Activated naive CD4-positive, alpha-beta T cell treated with anti-CD3 and anti-CD28 coated beads, Interleukin-2, amount 10 ng/mL, durations not matched to agents 7 days and 5 days (primary cell): ENCODE measurements at regions of chr11 and their contacts with region 1.

Region 1: DNA sequence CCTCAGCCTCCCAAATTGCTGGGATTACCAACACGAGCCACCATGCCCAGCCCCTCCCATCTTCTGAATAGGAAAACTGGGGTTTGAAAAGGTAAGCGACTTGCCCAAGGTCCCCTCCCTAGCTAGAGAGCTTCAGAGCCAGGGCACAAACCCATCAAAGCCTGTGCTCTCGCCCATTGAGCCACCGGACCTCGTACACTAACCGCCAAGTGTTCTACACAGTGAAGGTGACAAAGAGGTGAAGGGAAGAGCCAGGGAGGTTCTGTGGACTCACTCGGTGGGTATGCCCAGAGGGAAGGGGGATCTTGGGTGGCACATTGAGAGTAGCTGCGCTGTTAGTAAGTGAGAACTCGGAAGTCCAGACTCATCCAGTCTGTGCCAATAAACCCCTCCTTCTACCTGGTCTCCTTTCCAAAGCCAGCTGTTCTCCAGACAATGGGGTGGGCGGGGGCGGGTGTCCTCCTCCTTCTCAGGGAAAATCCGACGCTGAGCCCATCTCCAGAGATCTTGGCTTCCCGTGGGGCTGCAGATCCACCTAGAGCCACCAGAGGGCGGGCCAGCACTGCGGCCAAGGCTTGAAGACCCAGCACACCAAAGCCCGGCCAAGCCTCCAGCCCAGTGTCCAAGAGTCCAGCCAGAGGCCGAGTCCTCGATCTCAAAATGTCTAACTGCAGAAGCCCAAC is 3.2 kb upstream of the RTN4RL2 start:
- DNase-seq: peak; percentile 82
- H3K4me3 Mint-ChIP-seq: no peak overlapping the region
- H3K27ac Mint-ChIP-seq: no peak overlapping the region
- H3K4me1 Mint-ChIP-seq: peaks cover 32% of the 10 kb centered on the region
- H3K27me3 Mint-ChIP-seq: peaks cover 78% of the 10 kb centered on the region

Region 2: GRCh38 chr11:57303990-57304579 is 153.0 kb before region 1 on chr11:
- CTCF ChIA-PET with region 1: no interaction called
- DNase-seq: no peak
- H3K4me3 Mint-ChIP-seq: no peak overlapping the region
- H3K27ac Mint-ChIP-seq: no peak overlapping the region
- H3K4me1 Mint-ChIP-seq: no peaks in the 10 kb centered on the region
- H3K27me3 Mint-ChIP-seq: no peaks in the 10 kb centered on the region

Region 3: GRCh38 chr11:57345555-57346211 is 111.4 kb before region 1 on chr11:
- CTCF ChIA-PET with region 1: interaction called, 25 read pairs
- DNase-seq: peak; percentile 78
- H3K4me3 Mint-ChIP-seq: no peak overlapping the region
- H3K27ac Mint-ChIP-seq: no peak overlapping the region
- H3K4me1 Mint-ChIP-seq: no peaks in the 10 kb centered on the region
- H3K27me3 Mint-ChIP-seq: peaks cover 53% of the 10 kb centered on the region

Region 4: DNA sequence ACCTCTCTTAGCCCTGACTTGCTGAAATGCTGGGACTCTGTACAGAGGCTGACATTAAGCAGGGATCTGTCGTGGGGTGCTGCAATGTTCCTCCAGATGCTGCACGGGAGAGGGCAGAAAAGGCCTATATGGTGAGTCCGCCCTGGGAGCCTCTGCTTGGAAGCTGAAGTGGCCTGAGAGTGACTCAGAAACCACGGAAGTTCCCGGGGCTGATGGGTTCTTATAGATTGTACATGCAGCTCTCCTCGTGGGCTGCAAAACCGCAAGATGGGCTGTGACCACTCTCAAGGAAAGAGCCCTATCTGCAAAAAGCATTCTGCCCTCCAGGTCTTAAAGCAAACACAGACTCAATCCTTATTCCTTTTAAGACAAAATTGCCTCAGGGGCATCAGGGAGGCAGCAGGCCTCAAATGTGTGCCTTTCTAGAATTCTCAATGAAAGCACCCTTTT is 24.4 kb before region 1 on chr11:
- CTCF ChIA-PET with region 1: interaction called, 21 read pairs
- DNase-seq: no peak
- H3K4me3 Mint-ChIP-seq: no peak overlapping the region
- H3K27ac Mint-ChIP-seq: no peak overlapping the region
- H3K4me1 Mint-ChIP-seq: peaks cover under 1% of the 10 kb centered on the region
- H3K27me3 Mint-ChIP-seq: peaks cover 29% of the 10 kb centered on the region

Region 5: DNA sequence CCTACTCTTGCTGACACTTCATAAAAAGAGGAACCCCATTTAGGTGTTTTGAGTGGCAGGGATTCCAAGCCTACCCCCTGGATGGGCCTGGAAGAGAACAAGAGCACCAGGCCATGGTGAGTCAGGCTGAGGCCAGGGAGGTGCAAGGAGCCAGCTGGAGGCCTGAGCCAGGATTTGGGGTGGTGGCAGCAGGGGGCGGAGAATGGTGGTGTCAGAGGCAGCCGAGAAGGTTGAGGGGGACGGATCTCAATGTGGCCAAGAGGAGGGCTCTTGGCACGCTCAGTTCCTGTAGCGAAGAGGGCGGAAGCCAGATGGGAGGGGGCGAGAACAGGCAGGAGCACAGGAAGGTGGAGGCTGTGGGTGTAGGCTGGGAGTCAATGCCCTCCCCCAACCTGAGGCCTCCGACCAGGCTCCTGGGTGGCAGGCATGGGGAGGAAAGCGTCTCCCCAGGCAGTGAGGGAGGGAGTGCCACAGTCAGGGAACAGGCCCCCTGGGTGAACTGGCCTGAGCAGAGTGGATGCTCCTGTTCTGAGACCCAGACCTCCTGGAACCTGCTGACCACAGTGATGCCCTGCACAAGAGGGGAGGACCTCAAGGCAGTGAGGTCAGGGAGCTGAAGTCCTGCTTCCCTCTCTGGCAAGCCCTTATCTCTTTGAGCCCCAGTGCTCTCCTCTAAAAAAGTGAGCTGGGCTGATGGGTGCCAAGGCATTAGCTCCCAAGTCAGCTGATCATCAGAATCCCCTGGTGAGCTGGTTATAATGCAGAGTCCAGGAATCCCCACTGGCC is 17.1 kb after region 1 on chr11:
- CTCF ChIA-PET with region 1: interaction called, 43 read pairs
- DNase-seq: peak; percentile 77
- H3K4me3 Mint-ChIP-seq: peak overlapping the region; percentile 21
- H3K27ac Mint-ChIP-seq: peak overlapping the region; percentile 46
- H3K4me1 Mint-ChIP-seq: peaks cover 39% of the 10 kb centered on the region
- H3K27me3 Mint-ChIP-seq: peaks cover 65% of the 10 kb centered on the region

Region 6: GRCh38 chr11:57493507-57494503 is 36.7 kb after region 1 on chr11:
- CTCF ChIA-PET with region 1: interaction called, 44 read pairs
- DNase-seq: peak; percentile 84
- H3K4me3 Mint-ChIP-seq: no peak overlapping the region
- H3K27ac Mint-ChIP-seq: peak overlapping the region; percentile 89
- H3K4me1 Mint-ChIP-seq: peaks cover 13% of the 10 kb centered on the region
- H3K27me3 Mint-ChIP-seq: no peaks in the 10 kb centered on the region

Region 7: DNA sequence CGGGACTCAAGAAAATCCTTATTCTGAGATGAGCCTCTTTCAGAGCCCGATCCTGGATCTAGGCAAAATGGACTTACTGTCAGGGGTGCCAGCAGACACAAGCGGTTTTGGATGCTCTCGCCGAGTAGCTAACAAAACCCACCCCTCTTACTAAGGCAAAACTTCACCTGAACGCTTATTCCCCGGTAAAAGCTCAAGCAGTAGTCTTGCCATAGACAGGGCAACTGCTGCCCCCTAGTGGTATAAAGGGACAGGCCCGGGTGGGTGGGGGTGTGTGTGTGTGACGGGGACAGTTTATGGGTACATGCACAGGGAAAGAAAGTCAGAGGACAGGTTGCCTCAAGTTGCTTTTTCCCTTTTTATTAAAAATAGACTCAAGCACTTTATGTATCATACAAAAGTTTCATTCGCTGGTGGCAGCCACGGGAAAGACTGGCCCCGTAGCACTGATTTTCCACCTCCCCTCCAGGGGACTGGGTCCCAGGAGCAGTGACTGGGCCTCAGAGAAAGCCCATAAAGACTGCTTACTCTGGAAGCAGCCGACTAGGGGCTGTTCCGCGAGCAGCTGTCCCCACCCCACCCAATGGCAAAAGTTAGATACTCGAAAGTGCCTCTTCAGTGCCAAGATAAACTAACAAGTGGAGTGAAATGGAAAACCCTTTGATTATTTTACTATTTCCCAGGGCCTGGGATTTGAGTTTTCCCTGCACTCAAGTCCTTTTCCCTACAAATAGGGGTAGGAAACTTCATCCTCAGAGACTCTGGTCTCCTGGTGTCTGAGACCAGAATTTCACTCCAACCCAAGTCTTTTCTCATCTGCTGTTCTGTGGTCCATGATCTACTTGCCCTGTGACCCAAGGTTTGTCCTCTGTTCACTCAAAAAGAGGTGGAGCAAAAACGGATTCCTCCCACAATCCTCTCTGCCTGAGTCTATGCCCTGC is 187.9 kb after region 1 on chr11:
- CTCF ChIA-PET with region 1: interaction called, 50 read pairs
- DNase-seq: peak; percentile 92
- H3K4me3 Mint-ChIP-seq: no peak overlapping the region
- H3K27ac Mint-ChIP-seq: no peak overlapping the region
- H3K4me1 Mint-ChIP-seq: peaks cover 47% of the 10 kb centered on the region
- H3K27me3 Mint-ChIP-seq: peaks cover 81% of the 10 kb centered on the region

Region 8: GRCh38 chr11:57761301-57762234 is 304.5 kb after region 1 on chr11 and contains the start of gene CTNND1:
- CTCF ChIA-PET with region 1: no interaction called
- DNase-seq: no peak
- H3K4me3 Mint-ChIP-seq: peak within 1 kb of the TSS; percentile 5
- H3K27ac Mint-ChIP-seq: no peak within 1 kb of the TSS
- H3K4me1 Mint-ChIP-seq: peaks cover 19% of the 10 kb centered on the region
- H3K27me3 Mint-ChIP-seq: peaks cover 23% of the 10 kb centered on the region